Activated T-helper 1 cell treated with anti-CD3 and anti-CD28 coated beads, Interleukin-12 subunit alpha, Interleukin-12 subunit beta, Interleukin-2, Interleukin-4 antibody, amounts not matched to agents 30 ng/mL and 10 ng/mL and 1 ng/mL, durations not matched to agents 14 hours and 24 hours and 36 hours (primary cell): ENCODE measurements at regions of chr7 and their contacts with region 1.

Region 1: GRCh38 chr7:130912862-130913631 is 179.0 kb upstream of the KLF14 start:
- DNase-seq: peak; percentile 79
- H3K4me3 Mint-ChIP-seq: peak overlapping the region; percentile 77
- H3K27ac Mint-ChIP-seq: peak overlapping the region; percentile 92
- H3K4me1 Mint-ChIP-seq: peaks cover 93% of the 10 kb centered on the region
- H3K27me3 Mint-ChIP-seq: no peaks in the 10 kb centered on the region

Region 2: DNA sequence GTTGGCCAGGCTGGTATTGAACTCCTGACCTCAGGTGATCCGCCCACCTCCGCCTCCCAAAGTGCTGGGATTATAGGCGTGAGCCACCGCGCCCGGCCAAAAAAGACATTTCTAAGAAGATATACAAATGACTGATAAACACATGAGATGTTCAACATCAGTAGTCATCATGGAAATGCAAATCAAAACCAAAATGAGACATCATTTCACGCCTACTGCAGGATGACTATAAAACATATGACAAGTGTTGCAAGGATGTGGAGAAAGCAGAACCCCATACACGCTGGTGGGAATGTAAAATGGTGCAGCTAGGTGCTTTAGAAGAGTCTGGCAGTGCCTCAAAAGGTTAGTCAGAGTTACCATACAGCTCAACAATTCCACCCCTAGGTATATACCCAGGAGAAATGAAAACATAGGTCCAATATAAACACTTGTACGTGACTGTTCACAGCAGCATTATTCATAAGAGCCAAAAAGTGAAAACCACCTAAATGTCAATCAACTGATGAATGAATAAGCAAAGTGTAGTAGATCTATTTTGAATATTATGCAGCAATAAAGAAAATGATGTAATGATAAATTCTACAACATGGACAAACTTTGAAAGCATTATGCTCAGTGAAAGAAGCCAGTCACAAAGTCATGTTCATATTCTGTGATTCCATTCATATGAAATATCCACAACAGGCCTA is 732.3 kb before region 1 on chr7:
- intact Hi-C with region 1: loop called (anchors 1 kb)
- DNase-seq: no peak
- H3K4me3 Mint-ChIP-seq: peak overlapping the region; percentile 15
- H3K27ac Mint-ChIP-seq: peak overlapping the region; percentile 92
- H3K4me1 Mint-ChIP-seq: peaks cover 36% of the 10 kb centered on the region
- H3K27me3 Mint-ChIP-seq: no peaks in the 10 kb centered on the region

Region 3: GRCh38 chr7:130781346-130781745 is 131.7 kb before region 1 on chr7:
- intact Hi-C with region 1: no loop called
- DNase-seq: no peak
- H3K4me3 Mint-ChIP-seq: no peak overlapping the region
- H3K27ac Mint-ChIP-seq: no peak overlapping the region
- H3K4me1 Mint-ChIP-seq: no peaks in the 10 kb centered on the region
- H3K27me3 Mint-ChIP-seq: peaks cover 15% of the 10 kb centered on the region

Region 4: DNA sequence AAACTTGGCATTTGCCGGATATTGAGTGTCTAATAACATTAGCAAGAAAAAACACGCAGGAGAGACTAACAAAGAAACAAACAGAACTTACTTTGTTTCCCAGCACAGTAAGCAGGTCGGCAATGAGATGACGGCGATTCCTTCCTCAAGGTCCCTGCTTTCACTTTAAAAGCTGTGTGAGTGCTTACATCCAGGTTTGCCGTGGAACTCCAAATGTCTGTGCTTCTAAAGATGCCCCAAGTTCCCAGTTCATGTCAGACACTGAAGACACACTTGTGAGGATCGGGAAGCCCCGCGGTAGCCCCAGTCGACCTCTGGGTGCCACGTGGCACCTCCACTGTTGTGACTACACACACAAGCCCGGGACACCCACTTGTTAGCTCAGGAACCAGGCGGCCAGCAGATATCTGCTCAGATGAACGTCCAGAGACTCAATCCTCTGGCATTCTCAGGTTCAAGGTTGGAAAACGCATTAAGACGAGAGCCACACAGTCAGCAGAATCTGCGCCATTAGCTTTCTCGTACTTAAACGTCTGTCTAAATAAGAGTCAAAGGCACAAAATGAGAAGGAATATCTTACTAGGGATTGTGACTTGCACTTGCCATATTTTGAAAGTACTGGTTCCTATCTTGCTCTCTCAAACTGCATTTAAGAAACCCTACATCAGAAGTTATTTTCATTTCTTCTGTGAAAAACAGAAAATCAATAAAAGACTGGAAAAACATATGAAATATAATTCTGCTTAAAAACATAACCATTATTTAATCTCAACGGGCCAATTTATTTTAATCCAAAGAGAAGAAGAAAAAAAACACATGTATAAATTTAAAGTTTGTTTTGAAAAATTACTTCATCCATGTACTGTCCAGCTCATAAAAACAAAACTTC is 28.5 kb after region 1 on chr7:
- intact Hi-C with region 1: loop called (anchors 1 kb)
- DNase-seq: no peak
- H3K4me3 Mint-ChIP-seq: peak overlapping the region; percentile 65
- H3K27ac Mint-ChIP-seq: peak overlapping the region; percentile 76
- H3K4me1 Mint-ChIP-seq: peaks cover 94% of the 10 kb centered on the region
- H3K27me3 Mint-ChIP-seq: no peaks in the 10 kb centered on the region

Region 5: DNA sequence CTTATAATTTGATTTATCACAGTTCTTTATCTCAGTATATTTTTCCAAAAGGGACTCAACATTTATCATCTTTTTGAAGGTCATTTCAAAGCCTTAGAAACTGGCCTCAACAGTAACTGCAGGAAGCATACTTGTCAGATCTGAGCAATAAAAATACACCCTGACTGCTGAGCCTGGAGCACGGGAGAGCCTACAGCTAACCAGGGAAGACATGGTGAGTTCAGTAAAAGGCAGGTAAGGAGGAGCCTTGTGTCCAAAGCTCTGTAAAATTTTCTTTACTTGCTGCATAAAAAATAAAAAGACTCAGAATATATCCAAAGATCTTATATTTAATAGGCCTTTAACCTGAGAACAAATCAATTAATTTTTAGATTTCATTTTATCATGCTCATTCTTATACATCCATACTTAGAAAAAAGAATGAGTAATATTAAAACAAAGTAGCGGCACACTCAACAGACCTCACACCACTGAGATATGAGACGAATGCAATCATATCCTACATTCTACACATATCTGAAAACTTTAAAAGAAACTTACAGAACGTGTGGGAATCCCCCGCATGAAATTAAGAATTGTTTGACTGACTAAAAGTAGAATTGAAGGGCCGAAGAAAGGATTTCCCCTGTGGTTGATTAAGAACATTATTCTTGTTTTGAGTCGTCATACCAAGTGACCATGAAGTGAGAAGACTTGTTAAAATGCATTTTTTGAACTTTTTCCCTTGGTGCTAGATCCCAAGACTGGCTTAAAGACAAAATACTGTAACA is 118.2 kb after region 1 on chr7:
- intact Hi-C with region 1: loop called (anchors 1 kb)
- DNase-seq: no peak
- H3K4me3 Mint-ChIP-seq: peak overlapping the region; percentile 42
- H3K27ac Mint-ChIP-seq: peak overlapping the region; percentile 81
- H3K4me1 Mint-ChIP-seq: peaks cover 79% of the 10 kb centered on the region
- H3K27me3 Mint-ChIP-seq: no peaks in the 10 kb centered on the region

Region 6: GRCh38 chr7:131057015-131057793 is 144.2 kb after region 1 on chr7:
- intact Hi-C with region 1: no loop called
- DNase-seq: peak; percentile 47
- H3K4me3 Mint-ChIP-seq: peak overlapping the region; percentile 78
- H3K27ac Mint-ChIP-seq: peak overlapping the region; percentile 80
- H3K4me1 Mint-ChIP-seq: peaks cover 52% of the 10 kb centered on the region
- H3K27me3 Mint-ChIP-seq: no peaks in the 10 kb centered on the region

Region 7: GRCh38 chr7:131231381-131232220 is 318.6 kb after region 1 on chr7:
- intact Hi-C with region 1: loop called (anchors 1 kb)
- DNase-seq: peak; percentile 65
- H3K4me3 Mint-ChIP-seq: peak overlapping the region; percentile 50
- H3K27ac Mint-ChIP-seq: peak overlapping the region; percentile 86
- H3K4me1 Mint-ChIP-seq: peaks cover 62% of the 10 kb centered on the region
- H3K27me3 Mint-ChIP-seq: no peaks in the 10 kb centered on the region